ENCODE measurements at regions of chr22 and their contacts with region 1.

Region 1: GRCh38 chr22:28019881-28020871 is 101.1 kb upstream of the PITPNB start:
- DNase-seq: peak; percentile 71
- H3K4me3 Mint-ChIP-seq: no peak overlapping the region
- H3K27ac Mint-ChIP-seq: no peak overlapping the region
- H3K4me1 Mint-ChIP-seq: no peaks in the 10 kb centered on the region
- H3K27me3 Mint-ChIP-seq: peaks cover 2% of the 10 kb centered on the region

Region 2: DNA sequence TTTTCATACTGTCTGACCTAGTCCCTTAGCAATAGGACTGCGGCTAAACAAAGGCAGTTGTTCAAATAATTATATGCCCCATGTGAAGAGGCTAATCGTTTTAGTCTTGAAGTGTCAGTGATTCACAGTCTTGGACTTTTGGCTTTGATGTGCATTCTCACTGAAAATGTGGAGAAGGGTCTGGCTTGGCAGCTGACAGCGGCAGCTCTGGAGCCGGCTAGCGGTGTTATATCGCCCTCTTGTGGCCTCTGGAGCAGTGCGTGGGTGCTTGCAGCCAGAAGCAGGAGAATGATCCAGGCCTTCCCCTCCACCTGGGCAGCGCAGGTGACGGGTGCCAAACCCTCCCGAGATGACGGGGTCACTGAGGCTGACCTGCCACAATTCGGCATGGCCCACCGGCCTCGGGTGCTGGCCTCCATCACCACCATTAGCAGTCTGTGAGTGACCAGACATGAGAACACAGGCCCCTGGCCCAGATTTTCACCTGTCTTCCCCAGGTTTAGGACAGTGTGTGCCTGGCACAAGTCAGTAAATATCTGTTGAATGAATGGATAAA is 10.8 kb before region 1 on chr22:
- CTCF ChIA-PET with region 1: interaction called, 12 read pairs
- POLR2A ChIA-PET with region 1: no interaction called
- intact Hi-C with region 1: no loop called
- DNase-seq: peak; percentile 84
- H3K4me3 Mint-ChIP-seq: no peak overlapping the region
- H3K27ac Mint-ChIP-seq: no peak overlapping the region
- H3K4me1 Mint-ChIP-seq: no peaks in the 10 kb centered on the region
- H3K27me3 Mint-ChIP-seq: no peaks in the 10 kb centered on the region

Region 3: DNA sequence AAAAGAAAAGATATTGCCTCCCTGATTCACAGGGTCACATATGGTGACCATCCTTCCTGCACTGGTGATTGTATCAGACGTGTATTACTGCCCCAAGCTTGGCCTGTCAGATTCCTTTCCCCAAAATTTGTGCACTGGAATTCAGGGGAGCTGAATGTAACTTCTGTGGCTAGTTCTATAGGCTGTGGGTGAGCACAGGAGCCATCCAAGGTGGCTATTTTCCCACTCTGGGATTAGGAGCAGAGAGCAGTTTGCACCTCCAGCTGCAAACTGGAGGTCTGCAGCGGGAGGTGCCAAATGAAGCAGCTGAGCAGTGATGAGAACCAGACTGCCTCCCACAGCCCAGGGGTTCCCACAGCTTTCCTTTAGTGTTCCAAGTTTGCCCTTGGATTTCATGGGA is 23.1 kb after region 1 on chr22:
- CTCF ChIA-PET with region 1: no interaction called
- POLR2A ChIA-PET with region 1: no interaction called
- intact Hi-C with region 1: no loop called
- DNase-seq: no peak
- H3K4me3 Mint-ChIP-seq: no peak overlapping the region
- H3K27ac Mint-ChIP-seq: no peak overlapping the region
- H3K4me1 Mint-ChIP-seq: no peaks in the 10 kb centered on the region
- H3K27me3 Mint-ChIP-seq: no peaks in the 10 kb centered on the region

Region 4: DNA sequence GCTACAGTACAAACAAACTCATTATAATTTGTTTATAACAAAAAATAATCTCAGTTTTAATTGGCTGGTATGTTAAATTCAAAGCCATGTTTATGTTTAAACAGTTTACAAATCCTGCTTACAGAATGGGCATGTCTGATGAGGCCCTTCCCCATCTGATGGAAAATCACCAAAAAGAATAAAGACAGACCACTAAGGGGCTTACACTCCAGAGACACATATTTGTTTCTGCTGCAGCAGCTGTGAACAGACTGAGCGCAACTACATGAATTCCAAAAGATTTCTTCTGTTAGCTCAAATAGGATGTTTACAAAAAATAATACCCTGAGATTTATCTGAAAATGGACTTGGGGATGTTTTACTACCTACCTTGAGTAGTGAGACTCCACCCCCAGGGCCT is 73.5 kb after region 1 on chr22:
- CTCF ChIA-PET with region 1: no interaction called
- POLR2A ChIA-PET with region 1: no interaction called
- intact Hi-C with region 1: no loop called
- DNase-seq: no peak
- H3K4me3 Mint-ChIP-seq: no peak overlapping the region
- H3K27ac Mint-ChIP-seq: no peak overlapping the region
- H3K4me1 Mint-ChIP-seq: no peaks in the 10 kb centered on the region
- H3K27me3 Mint-ChIP-seq: no peaks in the 10 kb centered on the region

Region 5: DNA sequence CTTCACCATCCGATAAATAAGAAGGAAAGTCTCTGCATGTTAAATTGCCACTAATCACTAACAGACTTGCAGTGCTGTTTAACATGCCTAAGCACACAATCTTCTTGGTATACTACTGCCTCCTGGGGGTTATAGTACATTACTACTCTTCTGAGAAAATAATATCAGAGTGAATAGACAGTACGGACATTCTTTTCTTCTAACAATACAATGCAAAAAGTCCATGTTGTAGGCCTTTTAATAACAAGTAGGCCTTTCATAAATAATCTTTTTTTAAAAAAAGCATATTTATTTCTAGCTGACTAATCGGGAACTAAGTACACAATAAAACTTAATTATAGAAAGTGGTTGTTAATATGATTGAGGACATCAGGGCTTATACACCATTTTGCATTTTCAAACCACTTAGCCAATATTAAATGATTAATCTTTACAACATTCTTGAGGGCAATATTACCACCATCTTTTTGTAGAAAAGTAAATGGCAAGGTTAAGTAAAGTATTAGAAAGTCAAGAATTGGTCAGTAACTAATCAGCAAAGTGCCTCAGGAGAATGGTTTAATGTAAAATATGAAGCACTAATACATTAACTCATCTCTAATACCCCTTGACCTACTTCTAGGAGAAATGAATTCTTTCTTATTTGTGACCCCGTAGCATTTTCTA is 574.8 kb after region 1 on chr22:
- CTCF ChIA-PET with region 1: interaction called, 19 read pairs
- POLR2A ChIA-PET with region 1: no interaction called
- intact Hi-C with region 1: loop called (anchors 2 kb)
- DNase-seq: no peak
- H3K4me3 Mint-ChIP-seq: no peak overlapping the region
- H3K27ac Mint-ChIP-seq: no peak overlapping the region
- H3K4me1 Mint-ChIP-seq: no peaks in the 10 kb centered on the region
- H3K27me3 Mint-ChIP-seq: peaks cover 9% of the 10 kb centered on the region